B cell (primary cell): ENCODE measurements at regions of chr6 and their contacts with region 1.

Region 1: GRCh38 chr6:43308101-43308989 is at the start of gene CRIP3:
- DNase-seq: peak; percentile 77
- ATAC-seq: peak; percentile 77
- H3K4me3 ChIP-seq: peak within 1 kb of the TSS in 4 of 5 experiments; percentile 52 to 68 (median 60)
- H3K4me3 Mint-ChIP-seq: peak within 1 kb of the TSS; percentile 92
- H3K27ac ChIP-seq: peak within 1 kb of the TSS; percentile 6 to 15
- H3K27ac Mint-ChIP-seq: peak within 1 kb of the TSS; percentile 71
- H3K4me1 ChIP-seq: peaks cover 40 to 43% of the 10 kb centered on the region in 2 donors
- H3K4me1 Mint-ChIP-seq: peaks cover 43% of the 10 kb centered on the region
- H3K27me3 ChIP-seq: no peaks in the 10 kb centered on the region
- H3K27me3 Mint-ChIP-seq: no peaks in the 10 kb centered on the region
- CTCF ChIP-seq: peak; percentile 74
- total RNA-seq, gene CRIP3: 25.8 and 27.9 TPM in 2 replicates

Region 2: DNA sequence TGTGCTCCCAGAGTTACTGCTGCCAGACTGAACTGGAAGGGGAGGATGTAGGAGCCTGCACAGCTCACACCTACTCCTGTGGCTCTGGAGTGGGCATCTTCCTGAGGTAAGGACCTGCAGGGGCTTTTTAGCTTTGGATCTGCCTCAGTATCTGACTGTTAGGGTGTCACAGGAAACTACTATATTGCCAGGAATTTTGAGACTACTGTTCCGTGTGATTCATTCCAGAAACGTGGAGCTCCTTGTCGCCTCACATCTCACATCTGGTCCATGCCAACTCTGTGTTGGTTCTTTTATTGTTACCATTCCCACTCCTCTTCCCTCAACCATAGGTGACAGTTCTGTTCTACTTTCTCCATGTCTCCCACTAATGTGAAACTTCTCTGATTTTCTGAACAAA is 620.1 kb before region 1 on chr6:
- CTCF ChIA-PET with region 1: no interaction called
- POLR2A ChIA-PET with region 1: no interaction called
- intact Hi-C with region 1: no loop called
- DNase-seq: no peak
- ATAC-seq: no peak
- H3K4me3 ChIP-seq: no peak overlapping the region
- H3K4me3 Mint-ChIP-seq: no peak overlapping the region
- H3K27ac ChIP-seq: no peak overlapping the region
- H3K27ac Mint-ChIP-seq: no peak overlapping the region
- H3K4me1 ChIP-seq: no peaks in the 10 kb centered on the region
- H3K4me1 Mint-ChIP-seq: peaks cover 1% of the 10 kb centered on the region
- H3K27me3 ChIP-seq: no peaks in the 10 kb centered on the region
- H3K27me3 Mint-ChIP-seq: no peaks in the 10 kb centered on the region
- CTCF ChIP-seq: no peak

Region 3: GRCh38 chr6:43274916-43275597 is 33.3 kb before region 1 on chr6:
- CTCF ChIA-PET with region 1: interaction called, 3 read pairs
- POLR2A ChIA-PET with region 1: no interaction called
- intact Hi-C with region 1: loop called (anchors 2 kb)
- DNase-seq: peak; percentile 55
- ATAC-seq: peak; percentile 11
- H3K4me3 ChIP-seq: peak overlapping the region in 4 of 5 experiments; percentile 48 to 69 (median 57)
- H3K4me3 Mint-ChIP-seq: peak overlapping the region; percentile 84
- H3K27ac ChIP-seq: no peak overlapping the region
- H3K27ac Mint-ChIP-seq: no peak overlapping the region
- H3K4me1 ChIP-seq: peaks cover 38 to 45% of the 10 kb centered on the region in 2 donors
- H3K4me1 Mint-ChIP-seq: peaks cover 47% of the 10 kb centered on the region
- H3K27me3 ChIP-seq: peaks cover 0 to 28% (median 8%) of the 10 kb centered on the region in 4 experiments
- H3K27me3 Mint-ChIP-seq: peaks cover 22% of the 10 kb centered on the region
- CTCF ChIP-seq: no peak

Region 4: GRCh38 chr6:43328528-43328927 is 20.2 kb after region 1 on chr6:
- CTCF ChIA-PET with region 1: interaction called, 48 read pairs
- POLR2A ChIA-PET with region 1: interaction called, 3 read pairs
- intact Hi-C with region 1: no loop called
- DNase-seq: no peak
- ATAC-seq: no peak
- H3K4me3 ChIP-seq: no peak overlapping the region
- H3K4me3 Mint-ChIP-seq: no peak overlapping the region
- H3K27ac ChIP-seq: no peak overlapping the region
- H3K27ac Mint-ChIP-seq: no peak overlapping the region
- H3K4me1 ChIP-seq: peaks cover 7 to 11% of the 10 kb centered on the region in 2 donors
- H3K4me1 Mint-ChIP-seq: peaks cover 21% of the 10 kb centered on the region
- H3K27me3 ChIP-seq: no peaks in the 10 kb centered on the region
- H3K27me3 Mint-ChIP-seq: no peaks in the 10 kb centered on the region
- CTCF ChIP-seq: no peak

Region 5: GRCh38 chr6:43355862-43356590 is 47.7 kb after region 1 on chr6:
- CTCF ChIA-PET with region 1: interaction called, 25 read pairs
- POLR2A ChIA-PET with region 1: no interaction called
- intact Hi-C with region 1: no loop called
- DNase-seq: no peak
- ATAC-seq: peak; percentile 49
- H3K4me3 ChIP-seq: no peak overlapping the region
- H3K4me3 Mint-ChIP-seq: no peak overlapping the region
- H3K27ac ChIP-seq: peak overlapping the region in 1 of 2 donors; percentile 46
- H3K27ac Mint-ChIP-seq: peak overlapping the region; percentile 20
- H3K4me1 ChIP-seq: peaks cover 0 to 4% of the 10 kb centered on the region in 2 donors
- H3K4me1 Mint-ChIP-seq: peaks cover 25% of the 10 kb centered on the region
- H3K27me3 ChIP-seq: no peaks in the 10 kb centered on the region
- H3K27me3 Mint-ChIP-seq: no peaks in the 10 kb centered on the region
- CTCF ChIP-seq: no peak

Region 6: GRCh38 chr6:43383021-43383667 is 74.8 kb after region 1 on chr6:
- CTCF ChIA-PET with region 1: interaction called, 18 read pairs
- POLR2A ChIA-PET with region 1: no interaction called
- intact Hi-C with region 1: loop called (anchors 2 kb)
- DNase-seq: no peak
- ATAC-seq: no peak
- H3K4me3 ChIP-seq: peak overlapping the region in 2 of 5 experiments; percentile 18 to 42
- H3K4me3 Mint-ChIP-seq: peak overlapping the region; percentile 85
- H3K27ac ChIP-seq: peak overlapping the region; percentile 91 to 94
- H3K27ac Mint-ChIP-seq: peak overlapping the region; percentile 98
- H3K4me1 ChIP-seq: peaks cover 68 to 73% of the 10 kb centered on the region in 2 donors
- H3K4me1 Mint-ChIP-seq: peaks cover 67% of the 10 kb centered on the region
- H3K27me3 ChIP-seq: peaks cover 0 to 4% (median 2%) of the 10 kb centered on the region in 4 experiments
- H3K27me3 Mint-ChIP-seq: peaks cover 12% of the 10 kb centered on the region
- CTCF ChIP-seq: no peak

Region 7: DNA sequence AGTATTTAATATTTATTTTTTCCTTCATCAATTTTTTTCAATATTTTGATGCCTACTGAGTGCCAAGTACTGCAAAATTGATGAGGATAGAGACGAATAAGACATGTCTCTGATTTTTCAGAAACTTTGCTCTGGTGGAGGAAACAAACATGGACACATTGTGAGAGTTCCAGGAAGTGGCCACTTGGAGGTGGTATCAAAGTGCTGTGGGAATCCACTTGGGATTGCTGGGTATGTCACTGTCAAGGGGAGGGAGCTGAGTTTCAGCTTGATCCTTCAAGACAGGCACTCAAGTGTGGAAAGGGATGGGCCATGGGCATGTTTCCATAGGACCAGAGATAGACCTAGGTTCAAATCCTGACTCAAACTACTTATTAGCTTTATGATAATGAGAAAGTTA is 94.5 kb after region 1 on chr6:
- CTCF ChIA-PET with region 1: interaction called, 28 read pairs
- POLR2A ChIA-PET with region 1: no interaction called
- intact Hi-C with region 1: loop called (anchors 1 kb)
- DNase-seq: no peak
- ATAC-seq: no peak
- H3K4me3 ChIP-seq: no peak overlapping the region
- H3K4me3 Mint-ChIP-seq: no peak overlapping the region
- H3K27ac ChIP-seq: no peak overlapping the region
- H3K27ac Mint-ChIP-seq: peak overlapping the region; percentile 23
- H3K4me1 ChIP-seq: peaks cover 2% of the 10 kb centered on the region in 2 donors
- H3K4me1 Mint-ChIP-seq: peaks cover 3% of the 10 kb centered on the region
- H3K27me3 ChIP-seq: peaks cover 0 to 5% (median 2%) of the 10 kb centered on the region in 4 experiments
- H3K27me3 Mint-ChIP-seq: peaks cover 32% of the 10 kb centered on the region
- CTCF ChIP-seq: no peak